CD4-positive, alpha-beta T cell (primary cell): ENCODE measurements at regions of chr11 and their contacts with region 1.

Region 1: GRCh38 chr11:118359295-118359958 is at the start of gene UBE4A:
- DNase-seq: peak; percentile 95 to 99 (median 98)
- ATAC-seq: peak; percentile 84
- H3K4me3 ChIP-seq: peak within 1 kb of the TSS; percentile 74
- H3K4me3 Mint-ChIP-seq: peak within 1 kb of the TSS; percentile 92
- H3K27ac ChIP-seq: peak within 1 kb of the TSS; percentile 89
- H3K27ac Mint-ChIP-seq: peak within 1 kb of the TSS; percentile 99
- H3K4me1 ChIP-seq: peaks cover 31% of the 10 kb centered on the region
- H3K4me1 Mint-ChIP-seq: peaks cover 60% of the 10 kb centered on the region
- H3K27me3 ChIP-seq: no peaks in the 10 kb centered on the region
- H3K27me3 Mint-ChIP-seq: peaks cover 8% of the 10 kb centered on the region
- CTCF ChIP-seq: no peak
- total RNA-seq, gene UBE4A: 40.1 to 43.0 TPM

Region 2: DNA sequence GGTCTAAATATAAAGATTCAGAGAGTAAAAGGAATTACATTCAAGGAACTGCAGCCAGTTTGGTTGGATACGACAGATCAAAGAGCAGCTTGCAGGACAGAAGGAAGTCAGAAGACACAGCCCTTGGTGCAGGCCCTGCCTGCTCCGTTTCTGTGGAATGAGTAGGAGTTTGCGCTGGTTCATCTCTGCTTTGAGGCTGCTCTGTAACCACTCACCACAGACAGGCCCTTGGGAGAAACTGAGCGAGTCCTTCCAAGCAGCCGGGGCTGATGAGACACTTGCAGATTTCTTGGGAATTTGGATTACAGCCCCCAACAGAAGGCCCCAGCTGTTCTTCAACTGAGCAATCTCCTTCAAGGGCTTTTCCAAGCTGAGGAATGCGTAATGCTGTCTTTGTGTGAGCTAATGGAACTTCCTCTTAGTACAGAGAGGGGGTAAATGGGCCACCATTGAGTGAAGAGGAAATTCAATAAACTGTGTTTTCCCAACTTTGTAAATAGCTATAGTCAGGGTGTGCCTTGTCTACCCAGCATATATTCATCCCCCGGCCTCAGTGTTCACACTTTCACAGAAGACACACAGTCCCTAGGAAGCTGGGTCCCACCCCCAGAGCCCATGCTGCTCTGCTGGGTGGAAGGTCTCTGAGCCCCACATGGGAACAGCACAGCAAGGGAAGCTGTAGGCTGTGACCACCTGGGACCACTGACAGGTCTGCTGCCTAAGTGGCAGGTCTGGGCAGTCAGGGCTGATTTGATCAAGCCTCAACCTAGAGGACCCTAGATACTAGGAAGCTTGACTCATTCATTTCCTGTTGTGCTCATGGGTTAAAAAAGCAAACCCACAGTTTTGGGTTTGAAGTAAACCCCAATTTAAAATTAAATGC is 356.6 kb before region 1 on chr11:
- CTCF ChIA-PET with region 1: no interaction called
- POLR2A ChIA-PET with region 1: no interaction called
- intact Hi-C with region 1: no loop called
- DNase-seq: peak in 10 of 14 experiments; percentile 29 to 70 (median 48)
- ATAC-seq: peak; percentile 48
- H3K4me3 ChIP-seq: peak overlapping the region; percentile 10
- H3K4me3 Mint-ChIP-seq: peak overlapping the region; percentile 82
- H3K27ac ChIP-seq: peak overlapping the region; percentile 72 to 76
- H3K27ac Mint-ChIP-seq: peak overlapping the region; percentile 84
- H3K4me1 ChIP-seq: peaks cover 99% of the 10 kb centered on the region
- H3K4me1 Mint-ChIP-seq: peaks cover 92% of the 10 kb centered on the region
- H3K27me3 ChIP-seq: no peaks in the 10 kb centered on the region
- H3K27me3 Mint-ChIP-seq: no peaks in the 10 kb centered on the region
- CTCF ChIP-seq: no peak

Region 3: GRCh38 chr11:118338637-118339061 is 20.8 kb before region 1 on chr11:
- CTCF ChIA-PET with region 1: interaction called, 5 read pairs
- POLR2A ChIA-PET with region 1: interaction called, 12 read pairs
- intact Hi-C with region 1: no loop called
- DNase-seq: peak; percentile 61 to 96 (median 86)
- ATAC-seq: peak; percentile 66
- H3K4me3 ChIP-seq: peak overlapping the region; percentile 86
- H3K4me3 Mint-ChIP-seq: peak overlapping the region; percentile 97
- H3K27ac ChIP-seq: peak overlapping the region; percentile 90
- H3K27ac Mint-ChIP-seq: peak overlapping the region; percentile 98
- H3K4me1 ChIP-seq: peaks cover 62% of the 10 kb centered on the region
- H3K4me1 Mint-ChIP-seq: peaks cover 70% of the 10 kb centered on the region
- H3K27me3 ChIP-seq: no peaks in the 10 kb centered on the region
- H3K27me3 Mint-ChIP-seq: no peaks in the 10 kb centered on the region
- CTCF ChIP-seq: no peak

Region 4: GRCh38 chr11:118343981-118344515 is 15.4 kb before region 1 on chr11 and contains the start of gene CD3G:
- CTCF ChIA-PET with region 1: interaction called, 5 read pairs
- POLR2A ChIA-PET with region 1: interaction called, 12 read pairs
- intact Hi-C with region 1: loop called (anchors 2 kb)
- DNase-seq: peak; percentile 63 to 86 (median 80)
- ATAC-seq: peak; percentile 75
- H3K4me3 ChIP-seq: peak within 1 kb of the TSS; percentile 86
- H3K4me3 Mint-ChIP-seq: peak within 1 kb of the TSS; percentile 97
- H3K27ac ChIP-seq: peak within 1 kb of the TSS; percentile 84 to 90
- H3K27ac Mint-ChIP-seq: peak within 1 kb of the TSS; percentile 98
- H3K4me1 ChIP-seq: peaks cover 61% of the 10 kb centered on the region
- H3K4me1 Mint-ChIP-seq: peaks cover 83% of the 10 kb centered on the region
- H3K27me3 ChIP-seq: no peaks in the 10 kb centered on the region
- H3K27me3 Mint-ChIP-seq: no peaks in the 10 kb centered on the region
- CTCF ChIP-seq: no peak
- total RNA-seq, gene CD3G: 102 to 109 TPM